ENCODE measurements at regions of chr16 and their contacts with region 1.

Region 1: DNA sequence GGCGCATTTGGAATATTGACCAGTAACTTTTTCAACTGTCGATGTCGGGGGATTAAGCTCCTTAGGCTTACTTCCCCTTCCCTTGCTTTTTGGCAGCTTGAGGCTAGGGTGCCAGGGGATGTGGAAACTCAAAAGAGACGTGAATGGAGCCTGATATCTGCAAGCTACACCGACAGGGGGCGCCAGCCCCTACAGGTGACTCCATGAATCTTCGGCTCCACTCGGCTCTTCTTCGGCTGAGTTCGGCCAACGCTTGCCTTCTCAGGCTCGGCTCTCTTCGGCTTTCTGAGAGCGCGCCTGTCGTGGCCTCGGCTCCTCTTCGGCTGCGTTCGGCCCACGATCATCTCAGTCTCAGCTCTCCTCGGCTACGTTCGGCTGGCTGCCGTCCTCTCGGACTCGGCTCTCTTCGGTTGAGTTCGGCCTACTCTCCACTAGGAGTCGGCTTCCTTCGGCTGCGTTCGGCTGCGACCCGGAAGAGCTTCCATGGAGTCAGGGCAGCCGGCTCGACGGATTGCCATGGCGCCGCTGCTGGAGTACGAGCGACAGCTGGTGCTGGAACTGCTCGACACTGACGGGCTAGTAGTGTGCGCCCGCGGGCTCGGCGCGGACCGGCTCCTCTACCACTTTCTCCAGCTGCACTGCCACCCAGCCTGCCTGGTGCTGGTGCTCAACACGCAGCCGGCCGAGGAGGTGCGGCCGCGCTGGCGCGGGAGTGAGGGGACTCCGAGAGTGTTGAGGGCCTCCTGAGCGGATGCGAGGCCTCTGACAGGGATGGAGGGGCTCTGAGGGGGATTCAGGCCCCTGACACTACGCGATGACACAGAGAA is at the start of gene ERCC4:
- DNase-seq: peak; percentile 100
- ATAC-seq: peak; percentile 99
- H3K4me3 Mint-ChIP-seq: peak within 1 kb of the TSS; percentile 95
- H3K27ac Mint-ChIP-seq: peak within 1 kb of the TSS; percentile 91
- H3K4me1 Mint-ChIP-seq: peaks cover 25% of the 10 kb centered on the region
- H3K27me3 Mint-ChIP-seq: peaks cover 4% of the 10 kb centered on the region
- total RNA-seq, gene ERCC4: 12.6 to 13.1 TPM

Region 2: DNA sequence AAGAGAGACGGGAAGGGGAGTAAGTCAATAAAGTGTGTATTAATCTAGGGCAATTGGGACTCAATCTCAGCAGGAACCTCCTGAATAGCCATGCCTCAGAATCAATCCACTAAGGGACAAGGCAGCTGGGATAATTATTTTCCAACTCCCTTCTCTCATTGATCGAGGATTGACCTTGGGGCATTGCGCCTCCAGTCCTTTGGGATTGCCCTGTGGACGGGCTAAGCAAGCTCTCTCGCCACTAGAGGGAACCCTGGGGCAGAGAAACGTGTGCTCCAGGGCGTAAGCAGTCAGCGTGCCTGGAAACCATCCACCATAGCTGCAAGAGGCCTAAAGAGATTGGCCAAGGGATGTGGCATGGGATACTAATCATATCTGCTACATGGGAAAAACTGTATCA is 53.8 kb before region 1 on chr16:
- CTCF ChIA-PET with region 1: interaction called, 10 read pairs
- DNase-seq: peak; percentile 63
- ATAC-seq: peak; percentile 58
- H3K4me3 Mint-ChIP-seq: no peak overlapping the region
- H3K27ac Mint-ChIP-seq: no peak overlapping the region
- H3K4me1 Mint-ChIP-seq: no peaks in the 10 kb centered on the region
- H3K27me3 Mint-ChIP-seq: peaks cover 11% of the 10 kb centered on the region

Region 3: GRCh38 chr16:13906168-13907089 is 13.5 kb before region 1 on chr16:
- CTCF ChIA-PET with region 1: interaction called, 31 read pairs
- DNase-seq: no peak
- ATAC-seq: no peak
- H3K4me3 Mint-ChIP-seq: no peak overlapping the region
- H3K27ac Mint-ChIP-seq: no peak overlapping the region
- H3K4me1 Mint-ChIP-seq: peaks cover 5% of the 10 kb centered on the region
- H3K27me3 Mint-ChIP-seq: peaks cover 13% of the 10 kb centered on the region

Region 4: DNA sequence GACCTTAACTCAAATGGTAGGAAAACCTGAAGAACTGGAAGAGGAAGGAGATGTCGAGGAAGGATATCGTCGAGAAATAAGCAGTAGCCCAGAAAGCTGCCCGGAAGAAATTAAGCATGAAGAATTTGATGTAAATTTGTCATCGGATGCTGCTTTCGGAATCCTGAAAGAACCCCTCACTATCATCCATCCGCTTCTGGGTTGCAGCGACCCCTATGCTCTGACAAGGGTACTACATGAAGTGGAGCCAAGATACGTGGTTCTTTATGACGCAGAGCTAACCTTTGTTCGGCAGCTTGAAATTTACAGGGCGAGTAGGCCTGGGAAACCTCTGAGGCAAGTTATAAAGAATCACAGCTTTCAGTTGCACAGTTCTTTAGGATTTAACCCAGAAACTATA is 15.5 kb after region 1 on chr16:
- CTCF ChIA-PET with region 1: interaction called, 17 read pairs
- DNase-seq: no peak
- ATAC-seq: no peak
- H3K4me3 Mint-ChIP-seq: no peak overlapping the region
- H3K27ac Mint-ChIP-seq: no peak overlapping the region
- H3K4me1 Mint-ChIP-seq: peaks cover 7% of the 10 kb centered on the region
- H3K27me3 Mint-ChIP-seq: no peaks in the 10 kb centered on the region

Region 5: DNA sequence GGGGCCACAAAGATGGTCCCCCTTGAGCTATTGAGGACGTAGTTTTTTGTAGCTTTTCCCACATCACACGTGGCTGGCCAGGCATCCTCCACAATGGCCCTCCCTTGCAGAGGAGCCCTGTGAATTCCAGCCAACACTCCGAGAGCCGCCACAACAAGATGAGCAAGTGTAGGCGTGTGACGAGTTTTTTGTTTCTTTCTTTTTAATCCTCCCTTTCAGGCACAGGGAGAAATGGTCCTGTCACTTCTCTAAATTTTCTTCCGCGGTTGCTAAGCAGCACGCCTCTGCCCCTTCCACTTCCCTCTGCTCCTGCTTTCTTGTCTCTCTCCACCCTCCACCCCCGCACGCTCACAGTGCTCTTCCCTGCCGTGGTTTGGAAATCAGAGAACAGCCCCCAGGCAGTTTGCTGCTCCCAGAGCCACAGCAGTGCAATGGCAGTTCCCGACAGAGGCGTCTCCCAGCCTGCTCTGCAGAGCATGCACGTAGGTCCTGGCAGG is 83.2 kb after region 1 on chr16:
- CTCF ChIA-PET with region 1: no interaction called
- DNase-seq: no peak
- ATAC-seq: no peak
- H3K4me3 Mint-ChIP-seq: no peak overlapping the region
- H3K27ac Mint-ChIP-seq: no peak overlapping the region
- H3K4me1 Mint-ChIP-seq: peaks cover 30% of the 10 kb centered on the region
- H3K27me3 Mint-ChIP-seq: peaks cover 24% of the 10 kb centered on the region

Region 6: DNA sequence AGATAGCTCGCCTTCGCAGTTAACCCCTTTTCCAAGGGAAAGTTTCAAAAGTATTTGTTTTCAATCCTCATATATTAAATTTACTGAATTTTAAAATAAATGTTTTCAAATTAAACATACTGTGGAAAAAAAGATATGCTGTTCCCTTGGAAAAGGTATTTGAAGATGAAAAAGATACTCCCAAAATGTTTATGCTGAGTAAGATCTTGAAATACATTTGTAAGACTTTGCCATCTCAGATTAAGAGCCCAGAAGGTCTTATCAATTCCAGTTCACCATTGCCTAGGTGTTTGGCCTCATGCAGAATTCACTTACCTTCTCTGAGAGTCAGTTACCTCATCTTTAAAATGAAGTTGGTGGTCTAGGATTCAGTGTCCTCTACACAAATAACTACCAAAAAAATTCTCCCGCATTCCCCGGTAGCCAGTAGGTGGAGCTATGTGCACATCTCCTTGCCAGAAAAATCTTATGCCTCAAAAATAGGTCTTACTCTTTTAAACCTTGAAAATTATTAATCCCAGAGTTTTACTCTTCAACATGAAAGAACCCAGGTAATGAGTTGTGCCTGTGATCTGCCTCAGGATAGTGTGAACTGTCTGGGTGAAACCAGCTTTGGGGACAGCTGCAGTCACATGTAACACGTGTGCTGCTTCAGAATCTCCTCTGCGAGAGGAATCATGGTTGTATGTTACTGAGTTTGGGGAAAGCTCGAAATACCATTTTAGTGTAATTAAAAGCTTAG is 329.6 kb after region 1 on chr16:
- CTCF ChIA-PET with region 1: interaction called, 11 read pairs
- DNase-seq: peak; percentile 67
- ATAC-seq: peak; percentile 36
- H3K4me3 Mint-ChIP-seq: no peak overlapping the region
- H3K27ac Mint-ChIP-seq: no peak overlapping the region
- H3K4me1 Mint-ChIP-seq: no peaks in the 10 kb centered on the region
- H3K27me3 Mint-ChIP-seq: no peaks in the 10 kb centered on the region

Region 7: GRCh38 chr16:14285513-14286385 is 365.9 kb after region 1 on chr16:
- CTCF ChIA-PET with region 1: interaction called, 33 read pairs
- DNase-seq: peak; percentile 93
- ATAC-seq: peak; percentile 88
- H3K4me3 Mint-ChIP-seq: peak overlapping the region; percentile 80
- H3K27ac Mint-ChIP-seq: peak overlapping the region; percentile 82
- H3K4me1 Mint-ChIP-seq: peaks cover 20% of the 10 kb centered on the region
- H3K27me3 Mint-ChIP-seq: peaks cover 2% of the 10 kb centered on the region

Measured in activated CD8-positive, alpha-beta memory T cell treated with anti-CD3 and anti-CD28 coated beads, Interleukin-2, amount 10 ng/mL, durations not matched to agents 7 days and 5 days (primary cell).